ENCODE measurements at regions of chr3 and their contacts with region 1.

Region 1: GRCh38 chr3:190205739-190206138 is 85.0 kb upstream of the P3H2 start:
- DNase-seq: no peak
- ATAC-seq: no peak
- H3K4me3 ChIP-seq: no peak overlapping the region
- H3K4me3 Mint-ChIP-seq: no peak overlapping the region
- H3K27ac ChIP-seq: no peak overlapping the region
- H3K27ac Mint-ChIP-seq: no peak overlapping the region
- H3K4me1 ChIP-seq: no peaks in the 10 kb centered on the region
- H3K4me1 Mint-ChIP-seq: peaks cover 0 to 3% (median 2%) of the 10 kb centered on the region in 3 donors
- H3K27me3 ChIP-seq: peaks cover 0 to 3% of the 10 kb centered on the region in 2 experiments
- H3K27me3 Mint-ChIP-seq: peaks cover 10 to 15% of the 10 kb centered on the region in 2 donors

Region 2: GRCh38 chr3:188620752-188621151 is 1585.0 kb before region 1 on chr3:
- CTCF ChIA-PET with region 1: interaction called in 1 of 2 experiments, 11 read pairs
- POLR2A ChIA-PET with region 1: no interaction called
- DNase-seq: no peak
- ATAC-seq: no peak
- H3K4me3 ChIP-seq: no peak overlapping the region
- H3K4me3 Mint-ChIP-seq: no peak overlapping the region
- H3K27ac ChIP-seq: no peak overlapping the region
- H3K27ac Mint-ChIP-seq: no peak overlapping the region
- H3K4me1 ChIP-seq: no peaks in the 10 kb centered on the region
- H3K4me1 Mint-ChIP-seq: peaks cover 0 to 5% (median 0%) of the 10 kb centered on the region in 3 donors
- H3K27me3 ChIP-seq: no peaks in the 10 kb centered on the region
- H3K27me3 Mint-ChIP-seq: no peaks in the 10 kb centered on the region

Region 3: GRCh38 chr3:189961525-189962161 is 244.1 kb before region 1 on chr3:
- CTCF ChIA-PET with region 1: interaction called in 1 of 2 experiments, 10 read pairs
- POLR2A ChIA-PET with region 1: no interaction called
- DNase-seq: peak in 33 of 35 experiments; percentile 6 to 69 (median 39)
- ATAC-seq: peak; percentile 35 to 73 (median 54)
- H3K4me3 ChIP-seq: no peak overlapping the region
- H3K4me3 Mint-ChIP-seq: no peak overlapping the region
- H3K27ac ChIP-seq: no peak overlapping the region
- H3K27ac Mint-ChIP-seq: no peak overlapping the region
- H3K4me1 ChIP-seq: no peaks in the 10 kb centered on the region
- H3K4me1 Mint-ChIP-seq: peaks cover 0 to 5% (median 0%) of the 10 kb centered on the region in 3 donors
- H3K27me3 ChIP-seq: peaks cover 0 to 14% of the 10 kb centered on the region in 2 experiments
- H3K27me3 Mint-ChIP-seq: peaks cover 11 to 16% of the 10 kb centered on the region in 2 donors

Measured in T-cell (primary cell).